ENCODE measurements at regions of chr3 and their contacts with region 1.

Region 1: GRCh38 chr3:16511681-16512434 is 1.6 kb downstream of the RFTN1 start:
- DNase-seq: peak; percentile 92
- ATAC-seq: peak; percentile 34
- H3K4me3 ChIP-seq: peak overlapping the region; percentile 96
- H3K27ac ChIP-seq: peak overlapping the region; percentile 93
- H3K4me1 ChIP-seq: peaks cover 19% of the 10 kb centered on the region
- H3K27me3 ChIP-seq: no peaks in the 10 kb centered on the region
- CTCF ChIP-seq: 0 out of 2 replicates have a peak, but pooled peaks have one; percentile 3
- POLR2A ChIP-seq: peak; percentile 66; the same call in 1 of the 2 replicates
- RAD21 ChIP-seq: no peak; the same call in 1 of the 2 replicates

Region 2: GRCh38 chr3:16338999-16339398 is 172.9 kb before region 1 on chr3:
- CTCF ChIA-PET with region 1: interaction called, 4 read pairs
- POLR2A ChIA-PET with region 1: no interaction called
- dilution Hi-C with region 1: no loop called
- in situ Hi-C with region 1: no loop called
- intact Hi-C with region 1: loop called (anchors 1 kb)
- DNase-seq: peak; percentile 97
- ATAC-seq: peak; percentile 91
- H3K4me3 ChIP-seq: no peak overlapping the region
- H3K27ac ChIP-seq: no peak overlapping the region
- H3K4me1 ChIP-seq: peaks cover 8% of the 10 kb centered on the region
- H3K27me3 ChIP-seq: no peaks in the 10 kb centered on the region
- CTCF ChIP-seq: no peak
- POLR2A ChIP-seq: no peak
- RAD21 ChIP-seq: no peak; the same call in 1 of the 2 replicates

Region 3: GRCh38 chr3:16349986-16350596 is 161.8 kb before region 1 on chr3:
- CTCF ChIA-PET with region 1: no interaction called
- POLR2A ChIA-PET with region 1: no interaction called
- dilution Hi-C with region 1: no loop called
- in situ Hi-C with region 1: no loop called
- intact Hi-C with region 1: no loop called
- DNase-seq: peak; percentile 88
- ATAC-seq: peak; percentile 67
- H3K4me3 ChIP-seq: no peak overlapping the region
- H3K27ac ChIP-seq: peak overlapping the region; percentile 52; the same call in 1 of the 2 replicates
- H3K4me1 ChIP-seq: peaks cover 8% of the 10 kb centered on the region
- H3K27me3 ChIP-seq: no peaks in the 10 kb centered on the region
- CTCF ChIP-seq: no peak
- POLR2A ChIP-seq: no peak
- RAD21 ChIP-seq: no peak

Region 4: DNA sequence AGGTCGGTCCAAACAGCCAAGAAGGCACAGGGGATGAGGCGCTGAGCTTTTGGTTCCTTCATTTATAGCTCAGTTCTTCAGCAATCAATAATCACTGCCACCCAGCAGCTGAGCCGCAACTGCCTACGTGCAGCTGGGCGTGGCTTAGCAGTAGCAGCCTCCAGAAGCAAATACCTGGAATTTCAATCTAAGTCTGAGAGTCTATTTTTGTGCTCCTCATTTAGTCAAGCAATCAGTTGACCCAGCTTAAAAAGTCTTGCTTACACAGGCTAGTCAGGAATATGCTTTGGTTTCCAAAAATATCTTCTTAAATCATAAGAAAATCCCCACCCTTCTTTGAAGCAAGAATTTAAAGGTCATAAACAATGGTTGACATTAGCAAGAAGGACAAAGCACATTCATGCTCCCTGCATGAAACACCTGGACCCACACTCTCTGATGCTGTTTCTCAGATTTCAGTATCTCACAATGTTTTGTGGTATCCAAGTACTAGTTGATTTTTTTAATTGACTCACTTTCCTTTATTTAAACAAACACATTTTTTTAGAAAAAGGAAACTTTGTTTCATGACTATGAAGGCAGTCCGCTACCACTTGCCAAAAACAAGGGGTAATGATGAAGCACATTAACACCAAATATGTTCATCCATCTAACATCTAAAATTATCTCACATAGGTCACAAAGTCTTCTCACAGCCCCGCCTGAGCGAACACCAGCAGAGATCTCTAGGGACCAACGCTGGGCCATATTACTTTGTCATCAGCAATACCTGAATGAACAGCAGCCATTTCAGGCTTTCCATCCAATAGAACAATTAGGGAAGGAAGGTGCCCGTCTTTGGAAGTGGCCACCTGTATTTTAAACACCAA is 140.8 kb before region 1 on chr3:
- CTCF ChIA-PET with region 1: no interaction called
- POLR2A ChIA-PET with region 1: no interaction called
- dilution Hi-C with region 1: no loop called
- in situ Hi-C with region 1: no loop called
- intact Hi-C with region 1: no loop called
- DNase-seq: peak; percentile 90
- ATAC-seq: peak; percentile 59
- H3K4me3 ChIP-seq: no peak overlapping the region
- H3K27ac ChIP-seq: peak overlapping the region; percentile 45; the same call in 1 of the 2 replicates
- H3K4me1 ChIP-seq: peaks cover 20% of the 10 kb centered on the region
- H3K27me3 ChIP-seq: no peaks in the 10 kb centered on the region
- CTCF ChIP-seq: no peak
- POLR2A ChIP-seq: no peak
- RAD21 ChIP-seq: no peak

Region 5: DNA sequence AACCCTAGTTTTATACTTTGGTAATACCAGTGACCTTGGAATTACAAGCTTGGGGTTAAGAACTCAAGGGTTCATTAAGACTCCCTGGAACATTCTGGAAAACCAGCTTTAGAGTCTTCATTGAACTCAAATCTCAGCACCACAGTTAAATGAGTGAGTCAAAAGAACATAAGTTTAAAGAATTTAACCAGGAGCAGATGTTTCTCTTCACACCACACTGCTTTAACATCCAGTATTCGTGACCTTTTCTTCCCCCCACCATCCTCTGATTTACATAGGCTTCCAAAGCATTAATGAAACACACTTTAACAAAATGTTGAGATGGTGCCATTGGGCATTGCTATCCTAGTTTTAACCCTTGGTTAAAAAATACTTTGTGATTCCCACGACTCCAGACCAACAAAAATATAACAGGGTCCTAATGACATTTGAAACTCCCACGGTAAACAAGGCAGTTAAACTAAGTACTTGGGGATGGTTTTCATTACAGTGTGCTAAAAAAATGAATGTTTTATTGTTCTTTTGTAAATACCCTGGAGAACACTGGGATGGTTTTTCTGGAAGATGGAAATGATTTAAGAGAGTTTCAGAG is 122.9 kb before region 1 on chr3:
- CTCF ChIA-PET with region 1: no interaction called
- POLR2A ChIA-PET with region 1: no interaction called
- dilution Hi-C with region 1: no loop called
- in situ Hi-C with region 1: no loop called
- intact Hi-C with region 1: loop called (anchors 5 kb)
- DNase-seq: peak; percentile 78
- ATAC-seq: peak; percentile 59
- H3K4me3 ChIP-seq: no peak overlapping the region
- H3K27ac ChIP-seq: peak overlapping the region; percentile 48; the same call in 1 of the 2 replicates
- H3K4me1 ChIP-seq: peaks cover 38% of the 10 kb centered on the region
- H3K27me3 ChIP-seq: no peaks in the 10 kb centered on the region
- CTCF ChIP-seq: no peak
- POLR2A ChIP-seq: no peak
- RAD21 ChIP-seq: no peak

Region 6: GRCh38 chr3:16448639-16449070 is 63.2 kb before region 1 on chr3:
- CTCF ChIA-PET with region 1: interaction called, 3 read pairs
- POLR2A ChIA-PET with region 1: no interaction called
- dilution Hi-C with region 1: no loop called
- in situ Hi-C with region 1: no loop called
- intact Hi-C with region 1: loop called (anchors 2 kb)
- DNase-seq: peak; percentile 98
- ATAC-seq: peak; percentile 97
- H3K4me3 ChIP-seq: no peak overlapping the region
- H3K27ac ChIP-seq: no peak overlapping the region
- H3K4me1 ChIP-seq: peaks cover 13% of the 10 kb centered on the region
- H3K27me3 ChIP-seq: no peaks in the 10 kb centered on the region
- CTCF ChIP-seq: no peak
- POLR2A ChIP-seq: no peak
- RAD21 ChIP-seq: 0 out of 2 replicates have a peak, but pooled peaks have one; percentile 39

Region 7: DNA sequence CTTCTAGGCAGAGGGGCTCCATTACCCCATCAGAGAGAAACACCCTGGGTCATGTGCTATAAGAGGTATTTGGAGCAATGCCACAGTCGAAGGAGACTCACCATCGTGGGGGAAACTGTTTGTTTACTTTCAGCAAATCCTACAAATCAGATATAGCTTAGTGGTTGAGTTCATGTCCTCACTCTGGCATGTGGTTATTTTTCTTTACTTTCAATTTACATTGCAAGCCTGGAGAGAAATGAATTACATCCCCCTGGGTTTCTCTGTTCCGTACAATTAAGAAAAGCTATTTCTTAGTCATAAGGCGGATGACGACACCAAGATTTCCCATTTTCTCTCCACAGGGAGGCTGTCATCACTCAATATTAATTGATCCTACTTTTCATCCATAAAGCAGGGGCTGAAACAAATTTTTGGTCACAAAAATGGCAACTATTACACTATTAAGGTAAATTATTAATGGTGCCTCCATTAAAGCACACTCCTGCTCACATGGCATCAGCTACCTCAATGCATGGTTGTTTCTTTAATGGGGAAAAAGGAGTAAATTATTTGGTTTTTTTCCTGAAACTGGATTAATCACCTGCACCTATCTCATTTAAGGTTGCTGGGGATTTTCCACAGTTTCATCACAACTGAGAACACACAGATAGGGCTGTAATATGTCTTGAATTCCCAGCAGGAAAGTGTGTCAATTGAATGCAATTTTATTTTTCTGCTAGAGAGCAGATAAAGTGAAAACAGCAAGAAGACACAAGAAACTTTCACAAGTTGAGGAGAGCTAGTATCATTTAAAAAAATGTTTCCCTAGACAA is 35.0 kb before region 1 on chr3:
- CTCF ChIA-PET with region 1: interaction called, 3 read pairs
- POLR2A ChIA-PET with region 1: interaction called, 3 read pairs
- dilution Hi-C with region 1: no loop called
- in situ Hi-C with region 1: no loop called
- intact Hi-C with region 1: loop called (anchors 5 kb)
- DNase-seq: peak; percentile 99
- ATAC-seq: peak; percentile 77
- H3K4me3 ChIP-seq: no peak overlapping the region
- H3K27ac ChIP-seq: peak overlapping the region; percentile 74; the same call in 1 of the 2 replicates
- H3K4me1 ChIP-seq: peaks cover 34% of the 10 kb centered on the region
- H3K27me3 ChIP-seq: no peaks in the 10 kb centered on the region
- CTCF ChIP-seq: no peak
- POLR2A ChIP-seq: no peak
- RAD21 ChIP-seq: no peak; the same call in 1 of the 2 replicates